ENCODE measurements at regions of chr13 and their contacts with region 1.

Region 1: DNA sequence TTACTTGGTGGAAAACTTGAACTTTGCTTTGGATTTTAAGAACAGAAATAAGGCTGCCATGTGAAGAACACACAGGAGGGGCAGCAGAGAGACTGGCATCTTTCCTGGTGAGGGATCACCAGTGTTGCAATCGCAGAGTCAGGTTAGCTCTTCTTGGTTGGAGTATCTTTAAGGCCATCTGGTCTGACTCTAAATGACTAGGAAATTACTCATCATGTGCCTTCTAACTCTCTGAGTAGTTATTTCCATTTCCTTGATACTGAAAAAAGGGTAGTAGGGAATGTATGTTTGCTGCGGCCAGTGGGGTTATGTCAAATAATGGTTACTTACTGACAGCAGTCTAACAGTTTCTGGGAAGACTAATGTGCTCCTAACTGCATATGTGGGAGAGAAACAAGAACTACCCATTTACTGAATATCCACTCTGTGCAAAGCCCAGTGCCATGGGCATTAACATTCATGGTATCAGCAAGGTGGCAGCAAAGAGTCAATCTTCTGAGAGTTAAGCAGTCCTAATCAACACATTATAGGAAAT is 122.1 kb downstream of the COG6 start:
- DNase-seq: no peak
- ATAC-seq: no peak

Region 2: GRCh38 chr13:39483326-39483725 is 294.3 kb before region 1 on chr13:
- intact Hi-C with region 1: no loop called
- DNase-seq: no peak
- ATAC-seq: no peak

Region 3: GRCh38 chr13:40069173-40070044 is 291.8 kb after region 1 on chr13:
- intact Hi-C with region 1: loop called (anchors 10 kb)
- DNase-seq: no peak
- ATAC-seq: peak; percentile 96

Measured in Right ventricle myocardium inferior (tissue), 1 donor.